K562 (cell line): ENCODE measurements at regions of chr9 and their contacts with region 1.

Region 1: GRCh38 chr9:122453677-122454135 is 24.0 kb downstream of the OR1J1 start:
- DNase-seq: no peak
- ATAC-seq: no peak
- H3K4me3 ChIP-seq: no peak overlapping the region
- H3K27ac ChIP-seq: no peak overlapping the region
- H3K4me1 ChIP-seq: no peaks in the 10 kb centered on the region
- H3K27me3 ChIP-seq: no peaks in the 10 kb centered on the region
- CTCF ChIP-seq: no peak
- EP300 ChIP-seq: no peak
- POLR2A ChIP-seq: no peak
- RAD21 ChIP-seq: no peak

Region 2: GRCh38 chr9:122099271-122099869 is 354.3 kb before region 1 on chr9:
- CTCF ChIA-PET with region 1: interaction called, 10 read pairs
- POLR2A ChIA-PET with region 1: no interaction called
- in situ Hi-C with region 1: no loop called
- intact Hi-C with region 1: loop called (anchors 1 kb)
- DNase-seq: peak; percentile 76 to 88 (median 80)
- ATAC-seq: peak; percentile 90
- H3K4me3 ChIP-seq: no peak overlapping the region
- H3K27ac ChIP-seq: no peak overlapping the region
- H3K4me1 ChIP-seq: no peaks in the 10 kb centered on the region; a peak in 2 of 5 replicates
- H3K27me3 ChIP-seq: peaks cover 0 to 11% of the 10 kb centered on the region in 2 experiments; a peak in 1 of 5 replicates
- CTCF ChIP-seq: peak; percentile 85 to 90 (median 90)
- EP300 ChIP-seq: no peak
- POLR2A ChIP-seq: no peak
- RAD21 ChIP-seq: peak; percentile 73 to 82

Region 3: GRCh38 chr9:122125158-122125508 is 328.6 kb before region 1 on chr9:
- CTCF ChIA-PET with region 1: interaction called, 11 read pairs
- POLR2A ChIA-PET with region 1: no interaction called
- in situ Hi-C with region 1: loop called (anchors 5 kb)
- intact Hi-C with region 1: loop called (anchors 1 kb)
- DNase-seq: peak; percentile 87 to 88 (median 88)
- ATAC-seq: peak; percentile 91
- H3K4me3 ChIP-seq: no peak overlapping the region
- H3K27ac ChIP-seq: no peak overlapping the region
- H3K4me1 ChIP-seq: peaks cover 0 to 30% of the 10 kb centered on the region in 2 experiments; a peak in 3 of 5 replicates
- H3K27me3 ChIP-seq: peaks cover 0 to 18% of the 10 kb centered on the region in 2 experiments; a peak in 3 of 5 replicates
- CTCF ChIP-seq: peak; percentile 94 to 96 (median 96)
- EP300 ChIP-seq: no peak
- POLR2A ChIP-seq: no peak
- RAD21 ChIP-seq: peak; percentile 99 to 100

Region 4: DNA sequence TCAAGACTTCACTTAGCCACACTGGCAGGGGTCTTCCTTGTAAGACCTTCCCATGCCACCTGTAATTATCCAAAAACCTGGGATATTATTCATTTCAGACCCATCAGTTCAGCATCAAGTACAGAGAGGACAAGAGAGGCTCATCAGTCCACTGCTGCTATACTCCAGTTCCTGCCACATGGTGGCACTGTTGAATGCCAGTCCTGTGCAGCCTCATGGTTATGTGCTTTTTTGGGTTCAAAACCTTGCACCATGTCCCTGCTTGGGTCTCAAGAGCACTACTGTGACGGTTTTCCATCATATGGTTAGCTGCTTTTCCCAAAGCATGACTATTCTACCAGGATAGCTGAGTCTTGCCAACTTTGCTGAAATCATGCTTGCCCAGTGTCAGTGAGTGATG is 74.4 kb before region 1 on chr9:
- CTCF ChIA-PET with region 1: no interaction called
- POLR2A ChIA-PET with region 1: interaction called, 3 read pairs
- in situ Hi-C with region 1: loop called (anchors 10 kb)
- intact Hi-C with region 1: loop called (anchors 1 kb)
- DNase-seq: peak in 3 of 4 experiments; percentile 30 to 43 (median 43)
- ATAC-seq: no peak
- H3K4me3 ChIP-seq: no peak overlapping the region
- H3K27ac ChIP-seq: no peak overlapping the region
- H3K4me1 ChIP-seq: peaks cover 46 to 47% of the 10 kb centered on the region in 2 experiments
- H3K27me3 ChIP-seq: no peaks in the 10 kb centered on the region
- CTCF ChIP-seq: peak; percentile 48 to 65 (median 60)
- EP300 ChIP-seq: no peak
- POLR2A ChIP-seq: no peak
- RAD21 ChIP-seq: peak in 1 of 2 experiments; percentile 53; a peak in 3 of 4 replicates

Region 5: GRCh38 chr9:122442568-122442967 is 11.1 kb before region 1 on chr9:
- CTCF ChIA-PET with region 1: no interaction called
- POLR2A ChIA-PET with region 1: no interaction called
- in situ Hi-C with region 1: no loop called
- intact Hi-C with region 1: no loop called
- DNase-seq: no peak
- ATAC-seq: no peak
- H3K4me3 ChIP-seq: no peak overlapping the region
- H3K27ac ChIP-seq: no peak overlapping the region
- H3K4me1 ChIP-seq: peaks cover 7 to 10% of the 10 kb centered on the region in 2 experiments; a peak in 3 of 5 replicates
- H3K27me3 ChIP-seq: no peaks in the 10 kb centered on the region
- CTCF ChIP-seq: no peak
- EP300 ChIP-seq: no peak
- POLR2A ChIP-seq: no peak
- RAD21 ChIP-seq: no peak